Heart right ventricle (tissue), 16 donors: ENCODE measurements at regions of chr3 and their contacts with region 1.

Region 1: GRCh38 chr3:29280404-29281093 is at the start of gene RBMS3:
- DNase-seq: peak; percentile 84 to 93
- ATAC-seq: peak; percentile 93 to 96 (median 94)
- H3K4me3 ChIP-seq: peak within 1 kb of the TSS; percentile 54 to 79 (median 68)
- H3K27ac ChIP-seq: peak within 1 kb of the TSS; percentile 77 to 96 (median 92)
- H3K4me1 ChIP-seq: peaks cover 0 to 36% (median 18%) of the 10 kb centered on the region in 9 donors
- H3K27me3 ChIP-seq: no peaks in the 10 kb centered on the region
- CTCF ChIP-seq: peak; percentile 37 to 80 (median 52)
- total RNA-seq, gene RBMS3: 22.0 to 41.1 (median 28.6) TPM

Region 2: DNA sequence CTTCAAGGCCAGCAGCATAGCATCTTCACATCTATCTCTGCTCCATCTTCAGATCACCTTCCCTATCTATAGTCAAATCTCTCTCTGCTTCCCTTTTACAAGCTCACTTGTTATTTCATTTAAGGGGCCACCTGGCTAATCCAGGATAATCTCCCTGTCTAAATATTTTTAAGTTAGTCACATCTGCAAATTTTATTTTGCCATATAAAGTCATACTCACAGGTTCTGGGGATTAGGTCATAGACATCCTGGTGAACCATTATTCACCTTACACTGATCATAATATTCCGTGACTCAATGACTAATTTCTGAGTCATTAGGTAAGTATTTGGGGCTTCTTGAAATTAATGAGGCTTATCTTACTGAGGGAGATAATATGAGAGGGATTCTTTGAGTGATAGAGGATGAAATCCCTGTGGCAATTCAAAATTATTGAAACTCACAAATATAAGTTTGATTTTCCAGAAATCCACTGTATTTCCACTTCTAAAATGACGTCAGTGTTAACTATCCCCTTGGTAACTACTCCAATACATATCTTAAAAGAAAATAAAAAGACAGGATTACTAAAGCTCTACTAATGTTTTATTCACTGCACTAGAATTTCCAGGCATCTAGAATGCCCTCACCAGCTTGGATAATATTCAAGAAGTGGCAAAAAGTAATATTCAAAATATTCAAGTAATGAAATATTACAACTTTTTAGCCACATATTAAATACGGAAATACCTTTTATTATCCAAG is 93.4 kb before region 1 on chr3:
- intact Hi-C with region 1: loop called in 1 of 10 experiments (anchors 10 kb)
- DNase-seq: no peak
- ATAC-seq: no peak
- H3K4me3 ChIP-seq: no peak overlapping the region
- H3K27ac ChIP-seq: peak overlapping the region in 1 of 10 donors; percentile 0
- H3K4me1 ChIP-seq: peaks cover 0 to 11% (median 6%) of the 10 kb centered on the region in 9 donors
- H3K27me3 ChIP-seq: no peaks in the 10 kb centered on the region
- CTCF ChIP-seq: no peak

Region 3: DNA sequence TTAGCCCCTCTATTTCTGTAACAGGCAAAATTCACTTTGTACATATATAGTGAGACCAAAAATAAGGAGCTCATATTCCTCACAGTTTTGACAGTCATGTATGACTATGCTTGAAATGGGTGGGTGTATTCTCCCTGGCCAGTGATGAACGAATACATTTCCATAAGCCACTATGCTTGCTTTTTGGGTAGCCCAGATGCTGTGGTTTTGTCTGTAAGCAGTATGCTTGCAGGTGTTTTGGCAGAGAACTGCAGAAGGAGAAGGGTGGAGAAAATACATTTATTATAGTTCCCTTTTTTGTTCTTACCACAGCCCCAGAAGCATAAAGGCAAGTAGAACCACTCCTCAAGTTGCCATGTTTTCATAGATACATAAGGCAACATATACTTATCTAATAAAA is 131.6 kb after region 1 on chr3:
- intact Hi-C with region 1: loop called in 3 of 10 experiments (anchors 5 to 10 kb)
- DNase-seq: no peak
- ATAC-seq: no peak
- H3K4me3 ChIP-seq: no peak overlapping the region
- H3K27ac ChIP-seq: no peak overlapping the region
- H3K4me1 ChIP-seq: peaks cover 4 to 83% (median 71%) of the 10 kb centered on the region in 9 donors
- H3K27me3 ChIP-seq: no peaks in the 10 kb centered on the region
- CTCF ChIP-seq: no peak

Region 4: DNA sequence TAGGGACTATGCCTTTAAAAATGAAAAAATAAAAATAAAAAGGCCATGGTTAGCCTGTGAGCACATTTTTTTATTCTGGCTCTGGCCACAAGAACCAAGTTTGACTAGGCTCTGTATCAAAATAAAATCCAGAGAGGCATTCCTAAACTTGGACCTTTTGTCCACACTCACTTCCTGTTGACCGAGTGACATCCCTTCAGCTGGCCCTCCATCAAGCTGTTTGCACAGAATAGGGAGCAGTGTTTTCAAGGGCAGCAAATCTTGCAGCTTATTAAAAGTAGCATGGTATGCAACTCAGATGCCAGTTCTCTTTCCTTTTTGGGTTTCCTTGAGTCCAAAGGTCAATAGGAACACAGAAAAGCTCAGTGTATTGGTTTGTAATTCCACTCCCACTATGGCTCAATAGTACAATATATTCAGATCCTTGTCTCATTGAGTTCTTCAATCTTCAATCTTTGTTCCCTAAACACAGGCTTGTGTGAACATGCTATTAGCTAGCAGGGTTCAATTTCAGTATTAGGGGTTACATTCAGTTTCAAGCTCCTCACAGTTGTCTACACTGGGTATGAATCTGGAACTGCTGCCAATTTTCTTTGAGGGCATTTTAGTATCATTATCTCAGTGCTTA is 244.8 kb after region 1 on chr3:
- intact Hi-C with region 1: loop called in 6 of 10 experiments (anchors 1 to 10 kb)
- DNase-seq: peak; percentile 32 to 75
- ATAC-seq: peak; percentile 91 to 96 (median 94)
- H3K4me3 ChIP-seq: peak overlapping the region in 1 of 10 donors; percentile 6
- H3K27ac ChIP-seq: peak overlapping the region; percentile 32 to 86 (median 68)
- H3K4me1 ChIP-seq: peaks cover 11 to 66% (median 35%) of the 10 kb centered on the region in 9 donors
- H3K27me3 ChIP-seq: no peaks in the 10 kb centered on the region
- CTCF ChIP-seq: no peak

Region 5: DNA sequence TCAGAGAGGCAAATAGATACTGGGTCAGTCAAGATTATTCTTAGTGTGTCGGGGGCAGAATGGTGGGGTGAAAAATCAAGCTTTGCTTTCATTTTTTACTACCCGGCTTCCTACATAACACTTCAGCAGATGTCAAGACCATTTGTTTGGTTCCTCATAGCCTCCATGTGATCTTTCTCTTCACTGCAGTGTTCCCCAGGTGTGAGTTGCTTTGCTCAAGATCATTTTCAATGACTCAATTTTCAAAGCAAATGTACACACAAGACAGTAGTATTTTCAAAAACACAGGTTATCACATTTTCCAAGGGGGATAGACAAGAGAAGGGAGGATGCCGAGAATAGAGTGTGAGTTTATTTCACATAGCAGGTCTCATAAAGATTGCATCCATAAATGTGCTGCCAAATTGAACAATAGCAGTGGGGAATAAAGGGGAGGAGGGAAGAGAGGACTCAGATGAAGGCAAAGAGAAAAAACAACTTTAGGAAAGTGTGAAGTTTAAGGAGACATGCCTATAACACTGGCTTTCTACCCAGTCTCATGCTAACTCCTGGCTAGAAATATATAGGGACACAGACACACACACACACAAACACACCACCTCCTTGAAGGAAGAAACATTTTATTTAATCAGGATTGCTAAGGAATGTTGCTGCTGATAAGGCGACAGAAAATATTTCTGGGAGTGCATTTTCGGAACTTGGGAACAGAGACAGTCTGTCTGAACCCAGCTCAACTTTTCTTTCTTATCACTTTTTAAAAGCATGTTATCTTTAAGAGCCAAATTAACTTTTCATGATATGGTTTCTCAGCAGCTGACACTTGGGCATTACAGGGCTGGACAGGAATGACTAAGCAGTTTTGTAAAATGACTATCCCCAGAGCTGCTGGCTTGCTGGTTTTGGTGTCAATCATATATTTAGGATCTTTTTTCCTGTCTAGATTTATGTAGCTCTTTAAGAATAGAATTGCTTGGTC is 402.8 kb after region 1 on chr3:
- intact Hi-C with region 1: loop called in 1 of 10 experiments (anchors 10 kb)
- DNase-seq: peak in 1 of 2 donors; percentile 25
- ATAC-seq: peak; percentile 26 to 87 (median 80)
- H3K4me3 ChIP-seq: peak overlapping the region in 1 of 10 donors; percentile 2
- H3K27ac ChIP-seq: peak overlapping the region; percentile 51 to 88 (median 72)
- H3K4me1 ChIP-seq: peaks cover 8 to 38% (median 31%) of the 10 kb centered on the region in 9 donors
- H3K27me3 ChIP-seq: no peaks in the 10 kb centered on the region
- CTCF ChIP-seq: no peak

Region 6: DNA sequence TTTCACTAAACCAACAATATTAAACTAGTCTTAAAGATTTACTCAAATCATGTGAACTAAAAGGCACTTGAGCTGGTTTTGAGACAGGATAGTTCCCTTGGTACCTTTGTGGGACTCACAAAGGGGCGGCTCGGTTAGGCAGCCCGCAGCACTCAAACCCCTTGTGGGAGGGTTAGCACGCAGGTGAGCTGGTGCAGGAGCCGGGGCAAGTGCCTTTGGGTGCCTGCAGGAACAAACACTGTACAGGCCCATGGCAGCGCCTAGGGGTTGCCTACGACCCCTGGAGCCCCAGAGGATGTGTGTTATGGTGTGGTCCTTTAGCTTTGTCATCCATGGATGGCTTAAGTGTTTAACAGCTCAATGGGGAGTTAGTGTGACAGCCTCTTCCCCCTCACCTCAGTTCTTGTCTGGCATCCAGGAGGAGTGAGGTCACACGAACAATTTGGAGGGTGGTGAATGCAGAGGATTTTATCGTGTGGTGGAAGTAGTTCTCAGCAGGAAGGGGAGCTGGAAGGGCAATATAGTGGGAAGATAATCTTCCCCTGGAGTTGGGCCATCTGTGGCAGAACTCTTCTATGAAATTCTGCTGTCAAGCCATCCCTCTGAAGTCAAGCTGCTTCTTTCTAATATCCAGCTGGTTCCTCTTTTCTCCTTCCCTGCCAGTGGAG is 471.2 kb after region 1 on chr3:
- intact Hi-C with region 1: loop called in 1 of 10 experiments (anchors 5 kb)
- DNase-seq: peak; percentile 9 to 54
- ATAC-seq: peak; percentile 36 to 95 (median 84)
- H3K4me3 ChIP-seq: no peak overlapping the region
- H3K27ac ChIP-seq: peak overlapping the region in 7 of 10 donors; percentile 2 to 54 (median 41)
- H3K4me1 ChIP-seq: peaks cover 0 to 47% (median 23%) of the 10 kb centered on the region in 9 donors
- H3K27me3 ChIP-seq: no peaks in the 10 kb centered on the region
- CTCF ChIP-seq: no peak

Region 7: DNA sequence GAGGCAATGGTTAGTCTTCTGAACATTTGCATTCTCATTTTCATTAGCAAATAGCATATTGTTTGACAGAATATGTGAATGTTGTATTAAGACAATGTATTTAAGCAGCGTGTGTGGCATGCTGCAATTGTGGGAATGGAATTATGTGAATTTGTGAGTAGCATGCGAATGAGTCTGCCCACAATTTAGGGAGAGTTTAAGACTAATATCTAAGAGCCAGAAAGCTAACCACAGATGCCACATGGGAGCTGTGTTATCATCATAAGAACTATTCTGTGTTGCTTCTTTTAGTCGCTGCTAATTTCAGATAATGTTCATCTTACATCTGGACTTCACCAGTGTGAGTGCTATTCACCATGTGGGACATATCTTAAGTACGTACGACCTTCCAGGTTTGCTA is 494.8 kb after region 1 on chr3:
- intact Hi-C with region 1: loop called in 1 of 10 experiments (anchors 10 kb)
- DNase-seq: no peak
- ATAC-seq: peak in 1 of 8 donors; percentile 39
- H3K4me3 ChIP-seq: no peak overlapping the region
- H3K27ac ChIP-seq: no peak overlapping the region
- H3K4me1 ChIP-seq: peaks cover 0 to 10% (median 0%) of the 10 kb centered on the region in 9 donors
- H3K27me3 ChIP-seq: no peaks in the 10 kb centered on the region
- CTCF ChIP-seq: no peak

Region 8: DNA sequence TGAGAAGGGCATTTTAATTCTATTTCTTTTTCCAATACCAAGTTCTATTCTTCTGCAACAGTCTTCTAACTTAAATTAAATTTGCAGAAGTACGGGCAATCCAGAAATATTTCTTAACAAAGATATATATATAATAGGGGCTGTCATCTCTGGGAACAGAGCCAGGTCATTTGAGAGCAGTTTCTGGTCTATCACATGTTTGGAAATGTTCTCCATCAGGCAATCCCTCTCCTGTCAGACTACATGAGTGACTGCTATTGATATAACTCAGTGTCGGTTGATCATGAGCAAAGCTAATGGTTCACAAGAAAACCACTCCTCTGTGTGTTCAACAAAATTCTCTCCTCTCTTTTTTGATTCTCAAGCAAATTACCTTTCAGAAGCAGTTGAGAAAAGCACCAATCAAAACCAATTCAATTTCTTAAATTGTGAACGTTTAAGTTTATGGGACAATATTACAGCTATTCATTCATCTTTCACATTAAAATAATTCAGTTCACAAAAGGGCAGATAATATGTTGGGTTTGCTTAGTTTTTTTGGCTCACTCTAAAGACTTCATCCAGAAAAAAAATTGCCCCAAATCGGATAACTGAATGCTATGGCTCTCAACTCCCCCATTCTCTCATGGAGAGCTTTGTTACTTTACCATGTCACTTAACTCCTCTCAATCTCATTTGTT is 1173.0 kb after region 1 on chr3:
- intact Hi-C with region 1: no loop called
- DNase-seq: peak in 1 of 2 donors; percentile 68
- ATAC-seq: peak; percentile 59 to 88 (median 80)
- H3K4me3 ChIP-seq: no peak overlapping the region
- H3K27ac ChIP-seq: peak overlapping the region in 9 of 10 donors; percentile 6 to 76 (median 51)
- H3K4me1 ChIP-seq: peaks cover 0 to 38% (median 9%) of the 10 kb centered on the region in 9 donors
- H3K27me3 ChIP-seq: no peaks in the 10 kb centered on the region
- CTCF ChIP-seq: no peak